ENCODE measurements at regions of chr4 and their contacts with region 1.

Region 1: GRCh38 chr4:74133786-74134499 is 24.0 kb upstream of the MTHFD2L start:
- DNase-seq: peak; percentile 66
- H3K4me3 Mint-ChIP-seq: no peak overlapping the region
- H3K27ac Mint-ChIP-seq: no peak overlapping the region
- H3K4me1 Mint-ChIP-seq: no peaks in the 10 kb centered on the region
- H3K27me3 Mint-ChIP-seq: peaks cover 4% of the 10 kb centered on the region

Region 2: GRCh38 chr4:73653695-73654106 is 480.2 kb before region 1 on chr4:
- CTCF ChIA-PET with region 1: interaction called, 10 read pairs
- DNase-seq: peak; percentile 24
- H3K4me3 Mint-ChIP-seq: no peak overlapping the region
- H3K27ac Mint-ChIP-seq: no peak overlapping the region
- H3K4me1 Mint-ChIP-seq: no peaks in the 10 kb centered on the region
- H3K27me3 Mint-ChIP-seq: peaks cover 7% of the 10 kb centered on the region

Region 3: DNA sequence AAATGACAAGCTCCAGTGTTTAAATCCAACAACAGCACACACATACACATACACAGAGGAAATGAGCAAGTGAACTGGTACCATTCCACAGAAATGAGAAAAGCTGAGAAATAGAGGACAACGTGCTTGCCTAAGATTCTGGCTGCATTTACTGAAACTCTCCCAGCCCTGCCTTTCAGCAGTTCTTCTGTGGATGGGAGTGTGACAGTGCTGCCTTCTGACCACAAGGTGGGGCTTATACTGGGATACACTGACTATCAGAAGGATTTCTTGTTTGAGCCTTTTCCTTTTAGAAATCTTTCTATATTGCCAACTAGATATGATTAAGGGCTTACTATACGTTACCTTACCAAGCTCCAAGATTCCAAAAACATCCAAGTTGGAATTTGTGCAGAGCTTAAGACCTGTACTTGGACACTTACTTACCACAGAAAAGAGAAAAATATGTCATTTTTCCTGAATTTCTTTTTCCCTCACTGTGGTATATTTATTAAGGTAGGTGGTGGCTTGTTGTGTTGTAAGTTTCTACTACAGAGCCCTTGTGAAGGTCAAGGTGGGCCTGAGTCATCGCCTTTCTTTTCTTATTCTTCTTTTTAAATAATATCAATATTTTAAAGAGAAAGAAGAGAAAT is 404.3 kb before region 1 on chr4:
- CTCF ChIA-PET with region 1: interaction called, 16 read pairs
- DNase-seq: peak; percentile 23
- H3K4me3 Mint-ChIP-seq: no peak overlapping the region
- H3K27ac Mint-ChIP-seq: no peak overlapping the region
- H3K4me1 Mint-ChIP-seq: no peaks in the 10 kb centered on the region
- H3K27me3 Mint-ChIP-seq: no peaks in the 10 kb centered on the region

Region 4: GRCh38 chr4:74062953-74063352 is 71.0 kb before region 1 on chr4:
- CTCF ChIA-PET with region 1: no interaction called
- DNase-seq: no peak
- H3K4me3 Mint-ChIP-seq: no peak overlapping the region
- H3K27ac Mint-ChIP-seq: no peak overlapping the region
- H3K4me1 Mint-ChIP-seq: no peaks in the 10 kb centered on the region
- H3K27me3 Mint-ChIP-seq: no peaks in the 10 kb centered on the region